Gastrocnemius medialis (tissue), 4 donors: ENCODE measurements at regions of chr1 and their contacts with region 1.

Region 1: DNA sequence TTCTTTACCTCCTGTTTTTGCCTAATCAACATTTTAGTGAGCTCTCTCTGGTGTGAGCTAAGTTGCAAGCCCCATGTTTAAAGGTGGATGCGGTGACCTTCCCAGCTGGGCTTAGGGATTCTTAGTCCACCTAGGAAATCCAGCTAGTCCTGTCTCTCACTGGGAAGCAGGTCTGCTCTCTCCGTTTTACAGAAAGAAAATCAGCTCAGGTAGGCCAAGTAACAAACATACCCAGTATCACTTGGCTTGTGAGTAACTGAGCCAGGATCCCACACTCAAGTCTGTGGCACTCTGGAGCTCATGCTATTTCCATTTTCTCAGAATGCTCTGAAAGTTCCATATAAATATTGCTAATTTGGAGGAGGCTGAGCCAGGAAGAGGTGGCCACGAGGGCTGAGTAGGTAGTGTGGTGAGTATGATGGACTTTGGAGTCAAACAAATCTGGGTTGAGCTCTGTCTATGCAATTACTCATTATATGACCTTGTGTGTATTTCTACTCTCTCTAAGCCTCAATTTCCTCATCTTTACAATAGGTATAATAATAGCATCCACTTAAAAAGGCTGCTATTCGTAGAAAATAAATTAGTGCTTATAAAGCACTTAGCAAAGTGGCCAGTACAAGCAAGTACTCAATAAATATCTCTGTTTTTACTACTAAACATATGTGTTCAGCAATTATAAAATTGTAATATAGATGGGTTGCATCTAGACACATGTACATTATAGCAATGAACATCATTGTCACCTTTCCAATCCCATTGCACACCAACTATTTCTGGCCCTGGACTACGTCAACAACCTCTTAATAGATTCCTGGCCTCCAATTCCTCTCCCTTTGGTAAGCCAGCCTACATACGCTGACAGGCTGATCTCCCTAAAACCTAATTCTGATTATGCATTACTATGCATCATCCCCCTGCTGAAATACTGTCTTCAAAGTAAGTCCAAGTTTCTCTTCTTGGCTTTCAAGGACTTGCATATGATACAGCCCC is 32.7 kb upstream of the DHCR24 start:
- DNase-seq: no peak
- ATAC-seq: peak; percentile 60 to 86
- H3K4me3 ChIP-seq: no peak overlapping the region
- H3K27ac ChIP-seq: peak overlapping the region in 1 of 4 donors; percentile 41
- H3K4me1 ChIP-seq: peaks cover 30% of the 10 kb centered on the region in 2 donors
- H3K27me3 ChIP-seq: no peaks in the 10 kb centered on the region
- CTCF ChIP-seq: no peak
- POLR2A ChIP-seq: no peak

Region 2: GRCh38 chr1:54857741-54858627 is 61.7 kb before region 1 on chr1:
- in situ Hi-C with region 1: no loop called
- intact Hi-C with region 1: loop called (anchors 1 kb)
- DNase-seq: peak in 1 of 2 donors; percentile 18
- ATAC-seq: no peak
- H3K4me3 ChIP-seq: no peak overlapping the region
- H3K27ac ChIP-seq: peak overlapping the region; percentile 16 to 83 (median 56)
- H3K4me1 ChIP-seq: peaks cover 30 to 36% of the 10 kb centered on the region in 2 donors
- H3K27me3 ChIP-seq: no peaks in the 10 kb centered on the region
- CTCF ChIP-seq: no peak
- POLR2A ChIP-seq: no peak